Posterior cingulate gyrus (tissue), 11 donors: ENCODE measurements at regions of chr2 and their contacts with region 1.

Region 1: GRCh38 chr2:100984892-100985379 is 17.2 kb upstream of the RPL31 start:
- DNase-seq: peak; percentile 59 to 97 (median 79)

Region 2: DNA sequence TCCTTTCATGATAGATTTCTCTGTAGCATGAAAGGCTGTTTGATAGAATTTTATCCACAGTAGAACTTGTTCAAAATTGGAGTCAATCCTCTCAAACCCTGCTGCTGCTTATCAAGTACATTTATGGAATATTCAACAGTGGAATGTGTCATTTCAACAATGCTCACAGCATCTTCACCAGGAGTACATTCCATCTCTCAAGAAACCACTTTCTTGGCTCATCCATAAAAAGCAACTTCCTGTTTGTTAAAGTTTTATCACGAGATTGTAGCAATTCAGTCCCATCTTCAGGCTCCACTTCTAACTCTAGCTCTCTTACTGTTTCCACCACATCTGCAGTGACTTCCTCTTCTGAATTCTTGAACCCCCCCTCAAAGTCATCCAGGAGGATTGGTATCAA is 392.7 kb before region 1 on chr2:
- intact Hi-C with region 1: loop called (anchors 1 kb)
- DNase-seq: no peak

Region 3: DNA sequence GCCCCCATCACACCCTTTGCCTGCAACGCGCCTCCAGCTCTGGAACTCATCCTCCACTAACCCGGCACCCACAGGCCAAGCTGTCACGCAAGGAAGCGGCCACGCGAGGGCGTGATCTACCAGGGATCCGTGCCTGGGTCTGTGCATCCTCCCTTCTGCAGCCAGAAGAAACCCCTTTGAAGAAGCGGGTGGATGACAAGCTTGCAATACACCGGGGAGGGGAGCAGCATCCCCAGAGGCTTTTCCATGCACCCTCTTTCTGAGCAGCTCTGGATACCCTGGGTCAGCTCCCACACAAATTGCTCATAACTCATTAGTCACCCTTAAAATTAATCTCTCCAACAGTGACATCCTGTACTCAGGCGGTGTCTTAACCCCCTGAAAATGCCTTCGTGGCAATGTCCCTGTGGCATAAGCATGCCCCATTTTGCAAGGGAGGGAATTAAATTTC is 374.5 kb before region 1 on chr2:
- intact Hi-C with region 1: loop called (anchors 1 kb)
- DNase-seq: peak; percentile 78 to 98 (median 90)

Region 4: DNA sequence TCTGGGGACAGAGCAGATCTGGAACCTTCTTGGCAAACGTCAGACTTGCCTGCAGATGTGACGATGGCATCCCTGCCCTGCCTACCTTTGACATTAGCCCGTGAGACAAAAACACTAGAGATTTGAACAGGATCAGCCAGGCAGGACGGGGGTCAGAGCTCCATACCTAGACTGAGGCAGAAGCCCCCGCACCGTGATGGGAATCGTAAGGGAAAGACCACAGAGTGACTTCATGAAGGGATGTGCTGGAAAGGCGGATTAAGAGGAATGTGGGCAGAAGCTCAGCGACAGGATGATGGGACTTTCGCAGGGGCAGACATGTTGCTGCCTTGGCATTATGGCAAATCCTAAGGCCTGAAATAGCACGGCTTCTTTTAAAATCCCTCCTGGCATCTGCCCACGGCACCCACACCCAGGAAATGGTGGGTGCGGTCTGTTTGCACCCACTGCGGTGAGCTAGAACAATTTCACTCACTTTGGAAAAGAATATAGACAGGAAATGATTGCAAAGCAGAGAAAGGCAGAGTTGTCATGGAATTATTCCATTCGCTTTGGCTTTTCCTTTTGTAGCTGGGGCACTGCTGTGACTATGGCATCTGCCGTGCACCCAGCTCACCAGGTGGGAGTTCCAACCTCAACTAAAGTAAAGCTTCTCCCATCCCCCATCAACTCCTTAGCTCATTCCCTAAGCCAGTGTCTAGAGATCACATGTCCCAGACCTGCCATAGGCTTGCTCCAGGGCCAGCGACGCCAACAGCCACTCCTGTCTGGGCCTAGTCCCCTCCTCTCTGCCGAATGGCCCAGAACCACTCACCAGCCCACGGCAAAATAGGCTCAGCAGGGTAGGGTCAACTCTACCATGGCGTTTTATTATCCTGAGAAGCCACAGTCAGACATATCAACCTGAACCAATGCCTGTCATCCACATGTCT is 277.7 kb before region 1 on chr2:
- intact Hi-C with region 1: no loop called
- DNase-seq: peak in 7 of 10 donors; percentile 9 to 87 (median 35)

Region 5: GRCh38 chr2:100730346-100730745 is 254.6 kb before region 1 on chr2:
- intact Hi-C with region 1: loop called (anchors 5 kb)
- DNase-seq: peak in 1 of 10 donors; percentile 17

Region 6: DNA sequence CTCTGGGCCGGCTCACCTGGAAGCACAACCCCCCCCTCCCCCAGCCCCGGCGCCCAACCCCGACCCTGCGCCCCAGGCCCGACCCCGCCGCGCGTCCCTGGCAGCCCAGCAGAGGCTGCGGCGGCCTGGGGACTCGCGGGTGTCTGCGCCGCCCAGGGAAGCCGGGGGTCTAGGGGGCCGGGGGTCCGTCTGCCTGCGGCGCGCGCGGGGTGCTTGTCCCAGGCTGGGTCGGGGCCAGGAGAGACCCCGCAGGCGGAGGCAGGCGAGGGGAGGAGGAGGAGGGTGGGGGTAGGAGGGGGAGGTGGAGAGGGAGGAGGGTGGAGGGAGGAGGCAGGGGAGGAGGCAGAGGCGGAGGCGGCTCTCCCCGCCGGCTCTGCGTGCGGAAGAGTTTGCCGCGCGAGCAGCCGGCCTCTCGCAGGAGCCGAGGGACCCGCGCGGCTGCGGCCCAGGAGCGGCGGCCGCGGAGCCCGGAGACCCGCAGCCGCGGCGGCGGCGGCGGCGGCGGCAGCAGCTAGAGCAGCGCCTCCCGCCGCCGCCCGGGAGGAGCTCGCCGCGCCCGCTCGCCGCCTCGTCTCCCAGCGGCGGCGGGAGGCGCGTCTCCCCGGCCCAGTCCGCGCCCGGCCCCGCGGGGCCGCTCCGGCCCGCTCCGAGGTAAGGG is 165.0 kb before region 1 on chr2 and contains the start of gene NPAS2:
- intact Hi-C with region 1: loop called (anchors 5 kb)
- DNase-seq: peak in 5 of 10 donors; percentile 26 to 91 (median 76)